ENCODE measurements at regions of chr10 and their contacts with region 1.

Region 1: GRCh38 chr10:52746169-52746568 is 26.4 kb downstream of the MBL2 start:
- DNase-seq: no peak
- H3K4me3 ChIP-seq: no peak overlapping the region
- H3K27ac ChIP-seq: no peak overlapping the region
- H3K27me3 ChIP-seq: peaks cover 2% of the 10 kb centered on the region
- CTCF ChIP-seq: peak; percentile 62

Region 2: DNA sequence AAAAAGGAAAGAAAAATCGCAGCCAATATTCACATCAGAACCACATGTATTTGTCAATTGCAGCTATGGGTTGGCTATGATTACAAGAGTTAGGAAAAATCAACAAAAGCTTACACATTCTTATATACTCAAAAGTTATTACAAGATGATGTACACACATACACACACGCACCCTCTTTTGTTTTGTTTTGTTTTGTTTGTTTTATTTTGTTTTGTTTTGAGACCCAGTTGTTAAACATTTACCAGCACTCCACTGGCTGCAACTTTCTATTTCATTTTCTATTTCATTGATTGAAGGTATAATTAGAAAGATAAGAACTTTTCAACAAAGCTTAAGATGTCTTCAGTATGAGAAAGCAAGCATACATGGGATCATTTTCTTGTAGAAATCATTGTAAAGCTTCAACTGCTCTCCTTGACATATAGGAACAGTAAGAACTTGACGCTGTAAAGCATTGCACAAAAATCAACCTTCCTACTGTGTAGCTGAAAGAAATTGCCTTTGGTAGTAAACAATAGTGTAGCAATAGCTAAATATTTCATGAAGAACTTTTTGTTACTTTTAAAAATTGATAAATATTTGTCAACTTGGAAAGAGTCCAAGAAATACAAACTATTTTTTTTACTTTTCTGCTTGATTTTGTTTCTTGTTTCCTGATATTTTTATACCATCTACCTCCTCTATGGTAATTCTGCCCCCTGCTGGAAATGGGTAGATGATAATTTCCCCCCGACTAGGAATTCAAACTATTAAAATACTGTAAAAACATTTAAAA is 179.5 kb before region 1 on chr10:
- CTCF ChIA-PET with region 1: no interaction called
- POLR2A ChIA-PET with region 1: no interaction called
- DNase-seq: peak; percentile 23
- H3K4me3 ChIP-seq: no peak overlapping the region
- H3K27ac ChIP-seq: no peak overlapping the region
- H3K27me3 ChIP-seq: no peaks in the 10 kb centered on the region
- CTCF ChIP-seq: peak; percentile 74

Region 3: GRCh38 chr10:52729271-52730104 is 16.7 kb before region 1 on chr10:
- CTCF ChIA-PET with region 1: interaction called, 19 read pairs
- POLR2A ChIA-PET with region 1: no interaction called
- DNase-seq: no peak
- H3K4me3 ChIP-seq: no peak overlapping the region
- H3K27ac ChIP-seq: no peak overlapping the region
- H3K27me3 ChIP-seq: no peaks in the 10 kb centered on the region
- CTCF ChIP-seq: peak; percentile 56

Measured in AG04450 (cell line).